Naive thymus-derived CD4-positive, alpha-beta T cell (primary cell): ENCODE measurements at regions of chr2 and their contacts with region 1.

Region 1: DNA sequence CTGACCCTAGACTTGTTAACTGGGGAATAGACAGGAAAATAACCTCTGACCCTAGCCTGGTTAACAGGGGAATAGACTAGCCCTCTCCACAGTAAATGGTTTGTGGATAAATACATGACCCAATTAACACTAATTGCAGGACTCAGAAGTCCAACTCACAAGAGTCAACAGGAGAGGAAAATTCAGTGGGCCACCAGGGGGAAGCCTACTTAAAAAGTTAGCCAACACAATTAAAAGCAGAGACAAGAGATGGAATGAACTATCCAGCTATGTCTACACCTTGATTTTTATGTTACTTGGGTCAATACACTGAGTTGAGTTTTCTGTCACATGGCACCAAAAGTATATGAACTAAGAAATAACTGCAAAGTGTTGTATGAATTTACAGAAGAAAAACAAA is 158.8 kb upstream of the SLC39A10 start:
- DNase-seq: peak in 7 of 9 donors; percentile 25 to 60 (median 47)
- ATAC-seq: peak; percentile 68
- H3K4me3 ChIP-seq: no peak overlapping the region
- H3K4me3 Mint-ChIP-seq: peak overlapping the region in 4 of 10 donors; percentile 20 to 60 (median 32)
- H3K27ac ChIP-seq: no peak overlapping the region
- H3K27ac Mint-ChIP-seq: peak overlapping the region in 7 of 9 donors; percentile 14 to 88 (median 63)
- H3K4me1 ChIP-seq: peaks cover 0 to 19% of the 10 kb centered on the region in 2 donors
- H3K4me1 Mint-ChIP-seq: peaks cover 12 to 81% (median 54%) of the 10 kb centered on the region in 7 donors
- H3K27me3 ChIP-seq: no peaks in the 10 kb centered on the region
- H3K27me3 Mint-ChIP-seq: no peaks in the 10 kb centered on the region

Region 2: DNA sequence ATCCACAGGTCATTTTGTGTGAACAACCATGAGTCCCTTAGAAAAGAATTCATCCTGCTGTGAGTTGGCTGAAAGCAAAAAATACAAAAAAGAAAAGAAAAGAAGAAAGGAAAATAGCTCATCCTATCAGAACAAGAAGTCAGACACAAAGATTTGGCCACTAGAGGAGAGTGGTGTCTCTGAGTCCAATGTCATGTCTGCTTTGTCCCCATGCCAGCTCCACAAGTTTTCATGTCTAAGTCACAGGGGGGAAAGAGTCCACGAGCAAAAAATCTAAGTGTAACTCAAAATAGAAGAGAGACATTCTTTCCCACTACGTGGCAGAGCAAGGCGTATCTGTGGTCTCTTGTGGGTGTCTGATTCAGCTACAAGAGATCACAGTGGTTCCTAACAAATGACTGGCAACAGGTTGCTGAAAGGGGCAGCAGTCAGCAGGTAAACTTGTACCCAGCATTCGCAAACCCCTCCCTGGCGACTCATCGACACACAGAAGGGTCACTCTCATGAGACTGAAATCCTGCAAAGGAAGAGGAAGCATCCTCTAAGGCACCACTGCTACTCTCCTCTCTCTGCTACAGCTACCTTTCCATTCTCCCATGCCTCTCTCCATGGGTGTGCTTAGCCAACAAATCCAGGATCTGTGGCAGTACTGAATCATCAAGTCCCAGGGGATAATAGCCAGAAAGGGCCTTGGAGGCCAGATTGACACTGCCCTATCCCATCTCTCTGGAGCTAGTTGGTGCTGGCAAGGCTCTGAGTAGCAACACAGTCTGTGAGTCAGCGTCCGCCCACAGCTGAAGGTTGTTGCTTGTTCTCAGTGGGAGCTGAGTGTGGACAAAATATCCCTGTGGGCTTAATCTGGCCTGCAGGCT is 35.8 kb after region 1 on chr2:
- CTCF ChIA-PET with region 1: interaction called, 35 read pairs
- POLR2A ChIA-PET with region 1: interaction called, 25 read pairs
- intact Hi-C with region 1: loop called in 1 of 2 experiments (anchors 1 kb)
- DNase-seq: peak in 8 of 9 donors; percentile 28 to 63 (median 42)
- ATAC-seq: peak; percentile 48
- H3K4me3 ChIP-seq: peak overlapping the region; percentile 51
- H3K4me3 Mint-ChIP-seq: peak overlapping the region; percentile 77 to 95 (median 90)
- H3K27ac ChIP-seq: peak overlapping the region; percentile 77
- H3K27ac Mint-ChIP-seq: peak overlapping the region; percentile 92 to 100 (median 98)
- H3K4me1 ChIP-seq: peaks cover 70 to 73% of the 10 kb centered on the region in 2 donors
- H3K4me1 Mint-ChIP-seq: peaks cover 69 to 90% (median 86%) of the 10 kb centered on the region in 7 donors
- H3K27me3 ChIP-seq: no peaks in the 10 kb centered on the region
- H3K27me3 Mint-ChIP-seq: no peaks in the 10 kb centered on the region

Region 3: GRCh38 chr2:195664528-195664927 is 166.4 kb after region 1 on chr2:
- CTCF ChIA-PET with region 1: interaction called, 66 read pairs
- POLR2A ChIA-PET with region 1: interaction called, 85 read pairs
- intact Hi-C with region 1: loop called (anchors 1 kb)
- DNase-seq: peak in 2 of 9 donors; percentile 13 to 20
- ATAC-seq: no peak
- H3K4me3 ChIP-seq: no peak overlapping the region
- H3K4me3 Mint-ChIP-seq: peak overlapping the region in 4 of 10 donors; percentile 45 to 54 (median 49)
- H3K27ac ChIP-seq: peak overlapping the region; percentile 42
- H3K27ac Mint-ChIP-seq: peak overlapping the region in 8 of 9 donors; percentile 71 to 93 (median 85)
- H3K4me1 ChIP-seq: peaks cover 20 to 46% of the 10 kb centered on the region in 2 donors
- H3K4me1 Mint-ChIP-seq: peaks cover 30 to 95% (median 78%) of the 10 kb centered on the region in 7 donors
- H3K27me3 ChIP-seq: no peaks in the 10 kb centered on the region
- H3K27me3 Mint-ChIP-seq: no peaks in the 10 kb centered on the region

Region 4: DNA sequence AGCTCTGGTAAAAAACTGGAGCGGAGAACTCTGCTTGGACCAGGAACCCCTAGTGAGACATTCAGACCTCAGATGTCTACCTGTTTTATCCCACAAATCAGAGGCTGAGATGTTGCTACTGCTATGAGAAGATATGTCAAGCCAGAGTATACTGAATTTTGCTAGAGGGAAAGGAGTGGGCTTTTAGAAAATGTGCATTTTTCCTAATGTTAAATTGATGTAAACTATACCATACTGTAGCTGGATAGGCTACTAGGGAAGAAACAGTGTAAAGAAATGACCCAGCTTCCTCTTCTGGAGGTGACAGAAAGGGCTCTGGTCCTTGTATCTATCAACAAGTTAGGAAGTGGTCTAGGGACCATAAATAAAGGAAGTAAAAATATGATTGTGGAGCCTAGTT is 223.9 kb after region 1 on chr2:
- CTCF ChIA-PET with region 1: no interaction called
- POLR2A ChIA-PET with region 1: no interaction called
- intact Hi-C with region 1: no loop called
- DNase-seq: no peak
- ATAC-seq: no peak
- H3K4me3 ChIP-seq: no peak overlapping the region
- H3K4me3 Mint-ChIP-seq: no peak overlapping the region
- H3K27ac ChIP-seq: no peak overlapping the region
- H3K27ac Mint-ChIP-seq: no peak overlapping the region
- H3K4me1 ChIP-seq: no peaks in the 10 kb centered on the region
- H3K4me1 Mint-ChIP-seq: peaks cover 4 to 11% (median 8%) of the 10 kb centered on the region in 7 donors
- H3K27me3 ChIP-seq: no peaks in the 10 kb centered on the region
- H3K27me3 Mint-ChIP-seq: no peaks in the 10 kb centered on the region

Region 5: DNA sequence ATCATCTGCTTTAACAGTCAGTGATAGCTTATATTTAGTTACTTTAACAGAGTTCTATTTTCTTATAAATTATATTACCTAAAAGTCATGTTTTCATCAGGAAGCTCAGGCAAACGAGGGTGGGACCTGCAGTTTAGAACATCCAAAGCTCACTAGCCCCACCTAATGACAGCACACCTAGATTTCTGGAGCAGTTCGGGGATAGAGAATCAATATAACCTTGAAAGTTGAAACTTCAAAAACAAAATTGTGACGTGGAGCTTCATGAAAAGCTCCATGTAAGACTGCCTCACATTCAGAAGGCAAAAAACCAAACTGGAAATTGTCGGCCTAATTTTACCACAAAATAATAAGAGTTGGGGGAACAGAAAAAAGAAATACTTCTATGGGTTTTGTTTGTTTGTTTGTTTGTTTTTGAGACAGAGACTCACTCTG is 955.5 kb after region 1 on chr2:
- CTCF ChIA-PET with region 1: no interaction called
- POLR2A ChIA-PET with region 1: no interaction called
- intact Hi-C with region 1: loop called in 1 of 2 experiments (anchors 10 kb)
- DNase-seq: peak in 7 of 9 donors; percentile 2 to 39 (median 19)
- ATAC-seq: peak; percentile 60
- H3K4me3 ChIP-seq: no peak overlapping the region
- H3K4me3 Mint-ChIP-seq: no peak overlapping the region
- H3K27ac ChIP-seq: no peak overlapping the region
- H3K27ac Mint-ChIP-seq: no peak overlapping the region
- H3K4me1 ChIP-seq: no peaks in the 10 kb centered on the region
- H3K4me1 Mint-ChIP-seq: peaks cover 0 to 6% (median 0%) of the 10 kb centered on the region in 7 donors
- H3K27me3 ChIP-seq: peaks cover 0 to 6% of the 10 kb centered on the region in 2 donors
- H3K27me3 Mint-ChIP-seq: peaks cover 25 to 42% (median 31%) of the 10 kb centered on the region in 5 donors